ENCODE measurements at regions of chr22 and their contacts with region 1.

Region 1: DNA sequence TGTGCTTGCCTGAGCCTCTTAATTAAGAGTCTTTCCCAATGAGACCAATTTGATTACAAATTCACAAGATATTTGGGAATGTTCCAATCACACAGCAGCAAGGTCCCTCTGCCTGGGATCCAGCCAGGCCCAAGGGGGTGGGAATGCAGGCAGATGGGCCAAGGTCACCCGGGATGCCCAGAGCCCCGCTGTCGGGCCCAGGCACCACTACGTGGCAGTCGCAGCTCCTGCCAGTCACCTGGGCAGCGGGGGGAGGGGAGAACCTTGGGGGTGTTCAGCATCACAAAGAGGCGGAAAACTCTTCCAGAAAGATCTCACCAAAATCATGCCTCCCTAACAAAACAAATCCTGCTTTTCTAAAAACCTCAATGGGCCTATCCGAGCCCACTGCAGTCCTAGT is 30.9 kb downstream of the PPM1F start:
- DNase-seq: no peak
- ATAC-seq: no peak
- H3K4me3 ChIP-seq: no peak overlapping the region
- H3K27ac ChIP-seq: no peak overlapping the region
- H3K4me1 ChIP-seq: no peaks in the 10 kb centered on the region
- H3K27me3 ChIP-seq: no peaks in the 10 kb centered on the region

Region 2: GRCh38 chr22:21876486-21877176 is 45.1 kb before region 1 on chr22:
- intact Hi-C with region 1: loop called in 1 of 4 experiments (anchors 10 kb)
- DNase-seq: no peak
- ATAC-seq: no peak
- H3K4me3 ChIP-seq: no peak overlapping the region
- H3K27ac ChIP-seq: no peak overlapping the region
- H3K4me1 ChIP-seq: no peaks in the 10 kb centered on the region
- H3K27me3 ChIP-seq: no peaks in the 10 kb centered on the region

Region 3: DNA sequence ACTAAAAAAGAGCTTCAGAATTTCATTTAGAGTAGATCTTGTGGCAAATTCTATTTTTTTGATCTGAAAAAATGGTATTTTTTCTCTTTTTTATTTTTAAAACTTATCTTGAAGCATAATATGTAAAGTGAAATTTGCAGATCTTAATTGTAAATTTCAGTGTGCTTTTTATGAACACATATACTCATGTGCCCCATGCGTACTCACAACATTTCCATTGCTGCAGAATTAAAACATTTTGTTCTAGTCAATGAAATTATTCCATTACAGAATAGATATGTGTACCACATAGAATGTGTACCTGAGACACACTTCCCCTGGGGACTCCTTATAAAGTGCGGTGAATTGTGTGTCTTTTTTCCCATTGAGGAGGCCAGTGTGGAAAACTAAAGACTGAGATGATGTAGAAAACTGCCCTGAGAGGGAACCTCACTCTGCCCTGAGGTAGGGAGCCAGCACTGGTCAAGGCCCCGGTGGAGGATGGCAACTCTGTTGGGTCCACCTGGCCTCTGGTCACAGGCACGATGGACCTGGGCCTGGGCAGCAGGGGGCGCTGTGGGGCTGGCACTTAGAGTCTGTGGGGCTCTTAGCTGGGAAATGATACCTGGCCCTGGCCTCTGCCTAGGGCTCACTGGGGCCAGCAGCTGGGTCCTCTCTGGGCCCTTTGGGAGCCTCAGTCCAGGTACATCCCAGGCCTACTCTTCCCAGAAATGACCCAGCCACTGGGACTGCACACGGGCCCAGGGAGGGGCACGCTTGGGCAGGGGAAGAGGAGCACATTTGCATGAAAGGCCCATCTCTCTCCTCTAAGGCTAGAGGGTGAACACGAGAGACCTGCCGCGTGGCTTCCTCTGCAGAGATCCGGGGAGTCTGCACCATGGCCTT is 138.7 kb after region 1 on chr22:
- intact Hi-C with region 1: no loop called
- DNase-seq: peak; percentile 50 to 77 (median 77)
- ATAC-seq: peak; percentile 53 to 76
- H3K4me3 ChIP-seq: no peak overlapping the region
- H3K27ac ChIP-seq: no peak overlapping the region
- H3K4me1 ChIP-seq: no peaks in the 10 kb centered on the region
- H3K27me3 ChIP-seq: no peaks in the 10 kb centered on the region